Naive thymus-derived CD4-positive, alpha-beta T cell (primary cell): ENCODE measurements at regions of chr13 and their contacts with region 1.

Region 1: DNA sequence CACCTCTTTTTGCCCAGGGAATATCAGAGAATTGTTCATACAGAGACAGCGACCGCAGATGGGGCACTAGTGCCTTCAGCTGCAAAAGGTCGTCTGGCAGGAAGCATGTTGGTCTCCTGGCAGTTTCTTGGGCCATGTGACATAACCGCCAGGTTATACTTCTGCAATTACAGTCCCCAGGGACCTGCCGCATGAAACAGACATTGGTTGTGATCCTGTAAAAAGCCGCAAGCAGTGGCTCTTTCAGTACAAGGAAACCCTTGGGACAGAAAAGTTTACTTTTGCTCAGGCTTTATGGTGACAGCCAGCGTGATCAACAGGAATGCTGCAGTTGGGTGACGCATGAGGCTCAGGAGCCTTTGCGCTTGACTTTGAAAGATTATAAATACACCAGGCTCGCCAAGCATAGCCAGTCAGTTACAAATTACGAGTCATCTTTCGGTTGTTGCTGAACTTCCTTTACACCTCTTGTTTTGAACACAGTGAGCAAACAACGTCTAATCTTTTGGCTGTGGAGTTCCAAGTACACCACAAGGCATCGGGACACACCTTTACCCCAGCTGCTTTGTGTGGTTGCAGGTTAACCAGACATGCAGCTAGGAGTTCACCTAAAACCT is 50.5 kb upstream of the UBE2L5 start:
- DNase-seq: peak; percentile 22 to 92 (median 89)
- ATAC-seq: peak; percentile 78
- H3K4me3 ChIP-seq: peak overlapping the region; percentile 37
- H3K4me3 Mint-ChIP-seq: peak overlapping the region; percentile 51 to 91 (median 76)
- H3K27ac ChIP-seq: peak overlapping the region; percentile 58
- H3K27ac Mint-ChIP-seq: peak overlapping the region; percentile 90 to 98 (median 95)
- H3K4me1 ChIP-seq: peaks cover 73% of the 10 kb centered on the region in 2 donors
- H3K4me1 Mint-ChIP-seq: peaks cover 68 to 87% (median 78%) of the 10 kb centered on the region in 7 donors
- H3K27me3 ChIP-seq: no peaks in the 10 kb centered on the region
- H3K27me3 Mint-ChIP-seq: no peaks in the 10 kb centered on the region

Region 2: DNA sequence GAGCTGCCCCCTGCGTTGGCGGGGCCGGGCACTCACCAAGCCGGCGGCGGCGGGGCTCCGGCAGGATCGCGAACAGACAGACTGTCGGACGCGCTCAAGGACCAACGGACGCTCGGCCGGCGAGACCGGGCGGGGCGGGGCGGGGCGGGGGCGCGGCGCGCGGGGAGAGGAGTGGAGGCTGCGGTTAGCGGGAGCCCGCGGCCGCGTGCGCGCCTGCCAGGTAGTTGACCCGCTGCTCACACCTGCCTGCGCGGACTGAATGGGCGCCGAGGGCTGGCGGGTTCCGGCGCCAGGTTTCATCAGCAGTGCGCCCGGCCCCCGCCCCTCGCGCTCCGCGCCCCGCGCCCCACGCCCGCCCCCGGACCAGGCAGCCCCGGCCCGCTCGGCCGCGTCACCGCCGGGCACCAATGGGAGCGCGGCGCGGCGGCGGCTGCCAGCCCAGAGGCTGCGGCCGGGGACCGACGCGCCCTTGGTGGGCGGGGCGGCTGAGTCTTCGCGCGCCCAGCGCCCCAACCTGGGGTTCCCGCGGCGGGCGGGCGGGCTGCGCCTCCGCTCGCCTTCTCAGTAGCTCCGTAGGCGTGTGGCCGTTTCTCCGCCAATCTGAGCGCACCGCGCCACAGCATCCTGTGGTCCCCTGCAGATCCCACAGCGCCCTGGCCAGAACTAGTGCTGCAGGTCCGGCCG is 776.2 kb before region 1 on chr13 and contains the start of gene SLC7A1:
- CTCF ChIA-PET with region 1: no interaction called
- POLR2A ChIA-PET with region 1: interaction called, 3 read pairs
- intact Hi-C with region 1: loop called in 1 of 2 experiments (anchors 10 kb)
- DNase-seq: peak; percentile 74 to 93 (median 85)
- ATAC-seq: peak; percentile 95
- H3K4me3 ChIP-seq: peak within 1 kb of the TSS; percentile 73
- H3K4me3 Mint-ChIP-seq: peak within 1 kb of the TSS; percentile 88 to 94 (median 90)
- H3K27ac ChIP-seq: peak within 1 kb of the TSS; percentile 82
- H3K27ac Mint-ChIP-seq: peak within 1 kb of the TSS; percentile 74 to 96 (median 87)
- H3K4me1 ChIP-seq: peaks cover 6 to 7% of the 10 kb centered on the region in 2 donors
- H3K4me1 Mint-ChIP-seq: peaks cover 26 to 49% (median 43%) of the 10 kb centered on the region in 7 donors
- H3K27me3 ChIP-seq: no peaks in the 10 kb centered on the region
- H3K27me3 Mint-ChIP-seq: peaks cover 0 to 3% (median 2%) of the 10 kb centered on the region in 5 donors
- total RNA-seq, gene SLC7A1: 12.2 to 63.8 (median 28.2) TPM

Region 3: GRCh38 chr13:30306762-30307193 is 65.0 kb before region 1 on chr13:
- CTCF ChIA-PET with region 1: interaction called, 4 read pairs
- POLR2A ChIA-PET with region 1: interaction called, 3 read pairs
- intact Hi-C with region 1: loop called (anchors 1 kb)
- DNase-seq: peak; percentile 78 to 91 (median 88)
- ATAC-seq: peak; percentile 95
- H3K4me3 ChIP-seq: peak overlapping the region; percentile 96
- H3K4me3 Mint-ChIP-seq: peak overlapping the region; percentile 79 to 92 (median 89)
- H3K27ac ChIP-seq: peak overlapping the region; percentile 78
- H3K27ac Mint-ChIP-seq: peak overlapping the region in 8 of 9 donors; percentile 37 to 89 (median 82)
- H3K4me1 ChIP-seq: peaks cover 0 to 4% of the 10 kb centered on the region in 2 donors
- H3K4me1 Mint-ChIP-seq: peaks cover 0 to 48% (median 7%) of the 10 kb centered on the region in 7 donors
- H3K27me3 ChIP-seq: no peaks in the 10 kb centered on the region
- H3K27me3 Mint-ChIP-seq: no peaks in the 10 kb centered on the region

Region 4: GRCh38 chr13:30382836-30383525 is 11.2 kb after region 1 on chr13:
- CTCF ChIA-PET with region 1: interaction called, 19 read pairs
- POLR2A ChIA-PET with region 1: interaction called, 281 read pairs
- intact Hi-C with region 1: loop called in 1 of 2 experiments (anchors 1 kb)
- DNase-seq: peak in 4 of 9 donors; percentile 29 to 38 (median 36)
- ATAC-seq: peak; percentile 32
- H3K4me3 ChIP-seq: no peak overlapping the region
- H3K4me3 Mint-ChIP-seq: peak overlapping the region; percentile 33 to 74 (median 62)
- H3K27ac ChIP-seq: no peak overlapping the region
- H3K27ac Mint-ChIP-seq: peak overlapping the region; percentile 19 to 91 (median 64)
- H3K4me1 ChIP-seq: peaks cover 14 to 30% of the 10 kb centered on the region in 2 donors
- H3K4me1 Mint-ChIP-seq: peaks cover 30 to 70% (median 47%) of the 10 kb centered on the region in 7 donors
- H3K27me3 ChIP-seq: no peaks in the 10 kb centered on the region
- H3K27me3 Mint-ChIP-seq: no peaks in the 10 kb centered on the region

Region 5: GRCh38 chr13:30422054-30422839 is 50.5 kb after region 1 on chr13 and contains the start of gene UBE2L5:
- CTCF ChIA-PET with region 1: interaction called, 8 read pairs
- POLR2A ChIA-PET with region 1: interaction called, 8 read pairs
- intact Hi-C with region 1: loop called (anchors 1 kb)
- DNase-seq: peak; percentile 41 to 89 (median 56)
- ATAC-seq: peak; percentile 92
- H3K4me3 ChIP-seq: peak within 1 kb of the TSS; percentile 67
- H3K4me3 Mint-ChIP-seq: peak within 1 kb of the TSS; percentile 80 to 94 (median 89)
- H3K27ac ChIP-seq: peak within 1 kb of the TSS; percentile 38
- H3K27ac Mint-ChIP-seq: peak within 1 kb of the TSS; percentile 64 to 93 (median 86)
- H3K4me1 ChIP-seq: no peaks in the 10 kb centered on the region
- H3K4me1 Mint-ChIP-seq: peaks cover 7 to 29% (median 15%) of the 10 kb centered on the region in 7 donors
- H3K27me3 ChIP-seq: no peaks in the 10 kb centered on the region
- H3K27me3 Mint-ChIP-seq: no peaks in the 10 kb centered on the region
- total RNA-seq, gene UBE2L5: not detected

Region 6: DNA sequence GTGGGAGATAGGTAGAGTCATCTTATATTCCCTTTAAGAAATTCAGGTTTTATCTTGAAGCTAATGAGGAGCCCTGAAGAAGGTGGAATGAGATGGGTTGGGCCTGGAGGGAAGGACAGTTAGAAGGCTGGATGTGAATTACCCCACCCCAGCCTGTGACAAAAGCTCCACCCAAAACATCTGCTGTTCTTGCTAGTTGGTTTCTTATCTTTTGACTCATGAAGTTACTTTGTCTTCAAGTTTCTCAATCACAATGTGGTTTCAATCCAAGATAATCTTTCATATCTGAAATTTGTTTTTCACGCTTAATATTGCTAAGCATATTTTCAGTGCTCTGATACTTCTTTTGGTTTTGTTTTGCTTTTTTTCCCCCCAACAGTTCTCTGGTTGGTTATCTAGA is 132.3 kb after region 1 on chr13:
- CTCF ChIA-PET with region 1: no interaction called
- POLR2A ChIA-PET with region 1: no interaction called
- intact Hi-C with region 1: no loop called
- DNase-seq: no peak
- ATAC-seq: peak; percentile 53
- H3K4me3 ChIP-seq: no peak overlapping the region
- H3K4me3 Mint-ChIP-seq: no peak overlapping the region
- H3K27ac ChIP-seq: no peak overlapping the region
- H3K27ac Mint-ChIP-seq: peak overlapping the region in 1 of 9 donors; percentile 30
- H3K4me1 ChIP-seq: no peaks in the 10 kb centered on the region
- H3K4me1 Mint-ChIP-seq: peaks cover 0 to 13% (median 0%) of the 10 kb centered on the region in 7 donors
- H3K27me3 ChIP-seq: no peaks in the 10 kb centered on the region
- H3K27me3 Mint-ChIP-seq: peaks cover 0 to 7% (median 0%) of the 10 kb centered on the region in 5 donors

Region 7: GRCh38 chr13:30739761-30740642 is 368.2 kb after region 1 on chr13:
- CTCF ChIA-PET with region 1: no interaction called
- POLR2A ChIA-PET with region 1: no interaction called
- intact Hi-C with region 1: loop called in 1 of 2 experiments (anchors 1 kb)
- DNase-seq: peak in 8 of 9 donors; percentile 16 to 61 (median 32)
- ATAC-seq: peak; percentile 47
- H3K4me3 ChIP-seq: peak overlapping the region; percentile 29
- H3K4me3 Mint-ChIP-seq: peak overlapping the region; percentile 79 to 87 (median 82)
- H3K27ac ChIP-seq: no peak overlapping the region
- H3K27ac Mint-ChIP-seq: peak overlapping the region; percentile 7 to 93 (median 66)
- H3K4me1 ChIP-seq: peaks cover 59 to 60% of the 10 kb centered on the region in 2 donors
- H3K4me1 Mint-ChIP-seq: peaks cover 68 to 81% (median 79%) of the 10 kb centered on the region in 7 donors
- H3K27me3 ChIP-seq: no peaks in the 10 kb centered on the region
- H3K27me3 Mint-ChIP-seq: no peaks in the 10 kb centered on the region

Region 8: DNA sequence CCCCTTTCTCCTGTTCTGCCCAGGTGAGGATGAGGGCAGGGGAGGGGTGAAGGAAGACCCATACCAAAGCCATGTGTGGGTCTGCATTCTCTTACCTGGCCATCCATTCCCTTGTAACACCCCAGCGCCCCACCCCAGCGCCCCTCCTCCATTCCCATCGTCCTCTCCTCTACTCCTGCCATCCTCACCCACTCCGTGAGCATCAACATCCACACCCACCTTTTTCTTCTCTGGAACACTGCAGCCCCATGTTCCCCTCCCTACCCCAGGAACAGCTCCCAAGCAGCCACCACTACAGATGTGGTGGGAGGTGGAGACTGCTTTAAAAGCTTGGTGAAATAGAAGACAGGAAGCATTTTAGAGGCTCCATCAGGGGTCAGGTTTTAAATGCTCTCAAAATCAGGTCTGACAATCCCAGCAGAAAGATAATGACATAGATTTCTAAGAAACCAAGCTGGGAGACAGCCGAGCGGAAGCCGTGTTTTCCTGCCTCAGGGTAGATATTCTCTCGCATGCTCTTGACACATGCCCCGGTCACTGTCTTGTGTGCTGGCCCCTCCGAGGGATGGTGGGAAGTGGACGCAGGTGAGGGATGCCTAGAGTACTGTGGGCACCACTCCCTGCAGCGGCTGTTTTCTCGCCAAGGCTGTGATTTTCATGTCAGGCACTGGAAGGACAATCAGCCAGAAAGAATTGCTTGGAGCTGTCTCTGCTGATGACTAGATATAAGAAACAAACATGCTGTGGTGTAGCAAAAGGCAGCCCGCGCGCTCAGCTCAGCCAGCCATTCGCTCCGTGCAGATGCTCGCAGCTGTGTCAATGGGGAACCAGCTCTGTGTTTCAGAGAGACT is 544.2 kb after region 1 on chr13:
- CTCF ChIA-PET with region 1: no interaction called
- POLR2A ChIA-PET with region 1: no interaction called
- intact Hi-C with region 1: no loop called
- DNase-seq: no peak
- ATAC-seq: no peak
- H3K4me3 ChIP-seq: no peak overlapping the region
- H3K4me3 Mint-ChIP-seq: peak overlapping the region in 1 of 10 donors; percentile 15
- H3K27ac ChIP-seq: no peak overlapping the region
- H3K27ac Mint-ChIP-seq: no peak overlapping the region
- H3K4me1 ChIP-seq: no peaks in the 10 kb centered on the region
- H3K4me1 Mint-ChIP-seq: peaks cover 0 to 2% (median 0%) of the 10 kb centered on the region in 7 donors
- H3K27me3 ChIP-seq: no peaks in the 10 kb centered on the region
- H3K27me3 Mint-ChIP-seq: peaks cover 20 to 64% (median 32%) of the 10 kb centered on the region in 5 donors